ENCODE measurements at regions of chr13 and their contacts with region 1.

Region 1: DNA sequence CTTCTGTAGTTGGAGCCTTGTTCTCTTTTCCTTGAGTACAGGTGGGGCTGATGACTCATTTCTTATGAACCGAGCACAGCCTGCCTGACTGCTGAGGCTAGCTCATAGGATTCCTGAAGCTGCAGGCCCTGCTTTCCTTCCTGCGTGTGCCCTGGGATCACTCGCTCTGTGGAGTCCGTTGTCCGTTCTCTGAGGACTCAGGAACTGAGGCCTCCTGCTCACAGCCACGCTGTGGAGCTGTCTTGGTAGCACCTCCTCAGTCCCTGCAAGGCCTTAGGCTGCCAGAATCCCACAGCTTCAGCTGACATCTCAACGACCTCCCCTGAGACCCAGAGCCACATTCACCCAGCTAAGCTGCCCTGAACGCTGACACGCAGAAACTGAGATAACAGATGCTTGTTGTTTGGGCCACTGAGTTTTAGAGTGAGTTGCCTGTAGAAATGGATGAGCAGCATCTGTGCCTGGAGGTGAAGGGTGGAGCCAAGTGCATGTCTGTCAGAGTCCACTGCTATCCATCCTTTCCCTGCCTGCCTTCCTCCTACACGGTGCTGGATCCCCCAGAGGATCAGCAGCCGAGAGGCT is 72.9 kb downstream of the ARHGEF7 start:
- DNase-seq: peak in 1 of 5 donors; percentile 47
- ATAC-seq: peak; percentile 13 to 59 (median 46)
- H3K4me3 ChIP-seq: peak overlapping the region in 2 of 12 donors; percentile 11 to 43
- H3K27ac ChIP-seq: peak overlapping the region in 11 of 12 donors; percentile 25 to 61 (median 48)
- H3K4me1 ChIP-seq: peaks cover 13 to 73% (median 55%) of the 10 kb centered on the region in 12 donors
- H3K27me3 ChIP-seq: no peaks in the 10 kb centered on the region
- CTCF ChIP-seq: no peak
- POLR2A ChIP-seq: no peak

Region 2: GRCh38 chr13:111202745-111203144 is 14.7 kb after region 1 on chr13:
- intact Hi-C with region 1: loop called in 1 of 10 experiments (anchors 2 kb)
- DNase-seq: peak in 3 of 5 donors; percentile 45 to 73 (median 62)
- ATAC-seq: peak; percentile 66 to 90 (median 80)
- H3K4me3 ChIP-seq: peak overlapping the region in 11 of 12 donors; percentile 22 to 65 (median 51)
- H3K27ac ChIP-seq: peak overlapping the region; percentile 56 to 89 (median 79)
- H3K4me1 ChIP-seq: peaks cover 13 to 77% (median 52%) of the 10 kb centered on the region in 12 donors
- H3K27me3 ChIP-seq: no peaks in the 10 kb centered on the region
- CTCF ChIP-seq: no peak
- POLR2A ChIP-seq: peak in 1 of 2 donors; percentile 24

Region 3: DNA sequence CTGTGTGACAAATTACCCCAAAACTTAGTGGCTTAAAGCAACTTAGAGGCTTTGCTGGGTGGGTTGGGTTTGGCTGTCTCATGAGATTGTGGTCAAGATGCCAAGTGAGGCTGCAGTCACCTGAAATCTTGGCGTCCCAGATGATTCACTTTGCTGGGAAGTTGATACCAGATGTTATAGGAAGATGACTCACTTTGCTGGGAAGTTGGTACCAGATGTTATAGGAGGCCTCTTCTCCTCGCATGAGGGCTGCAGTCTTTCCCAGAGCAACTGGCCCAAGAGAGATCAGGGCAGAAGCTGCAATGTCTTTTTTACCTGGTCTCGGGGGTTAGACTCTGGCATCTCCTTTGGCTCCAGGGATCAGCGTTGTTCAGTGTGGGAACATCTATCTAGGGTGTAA is 149.2 kb after region 1 on chr13:
- intact Hi-C with region 1: no loop called
- DNase-seq: no peak
- ATAC-seq: no peak
- H3K4me3 ChIP-seq: no peak overlapping the region
- H3K27ac ChIP-seq: no peak overlapping the region
- H3K4me1 ChIP-seq: no peaks in the 10 kb centered on the region
- H3K27me3 ChIP-seq: no peaks in the 10 kb centered on the region
- CTCF ChIP-seq: no peak
- POLR2A ChIP-seq: no peak

Region 4: DNA sequence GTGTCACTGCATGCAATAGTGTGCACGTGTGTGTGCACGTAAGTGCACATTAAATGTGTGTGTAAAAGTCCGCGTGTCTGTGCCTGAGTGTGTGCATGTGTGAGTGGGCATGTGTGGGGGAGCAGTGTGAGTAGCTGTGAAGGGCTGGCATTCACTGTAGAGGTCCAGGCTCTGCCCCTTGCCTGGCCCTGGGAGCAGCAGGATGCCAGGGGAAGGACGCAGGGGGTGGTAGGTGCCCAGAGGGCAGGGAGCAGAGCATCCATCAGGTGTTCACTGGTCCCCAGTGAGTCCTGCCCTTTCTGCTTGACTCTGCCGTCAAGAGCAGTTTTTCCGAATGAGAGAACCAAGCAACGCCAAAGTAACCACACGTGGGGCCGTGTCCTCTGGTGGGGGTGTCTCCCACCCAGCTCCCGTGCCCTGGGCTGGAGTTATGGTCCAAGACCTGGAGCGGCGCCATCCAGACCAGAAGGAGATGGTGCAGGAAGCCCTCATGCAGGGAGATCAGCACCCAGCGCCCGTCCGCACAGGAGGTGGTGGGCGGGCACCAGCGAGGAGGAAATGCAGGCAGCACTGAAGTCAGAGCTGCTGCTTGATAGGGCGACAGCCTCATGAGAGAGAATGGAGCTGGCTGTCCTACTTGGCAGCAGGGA is 200.9 kb after region 1 on chr13:
- intact Hi-C with region 1: no loop called
- DNase-seq: peak in 2 of 5 donors; percentile 15 to 33
- ATAC-seq: no peak
- H3K4me3 ChIP-seq: no peak overlapping the region
- H3K27ac ChIP-seq: no peak overlapping the region
- H3K4me1 ChIP-seq: no peaks in the 10 kb centered on the region
- H3K27me3 ChIP-seq: peaks cover 0 to 24% (median 3%) of the 10 kb centered on the region in 9 donors
- CTCF ChIP-seq: no peak
- POLR2A ChIP-seq: no peak

Measured in heart left ventricle (tissue), 16 donors.